ENCODE measurements at regions of chr16 and their contacts with region 1.

Region 1: DNA sequence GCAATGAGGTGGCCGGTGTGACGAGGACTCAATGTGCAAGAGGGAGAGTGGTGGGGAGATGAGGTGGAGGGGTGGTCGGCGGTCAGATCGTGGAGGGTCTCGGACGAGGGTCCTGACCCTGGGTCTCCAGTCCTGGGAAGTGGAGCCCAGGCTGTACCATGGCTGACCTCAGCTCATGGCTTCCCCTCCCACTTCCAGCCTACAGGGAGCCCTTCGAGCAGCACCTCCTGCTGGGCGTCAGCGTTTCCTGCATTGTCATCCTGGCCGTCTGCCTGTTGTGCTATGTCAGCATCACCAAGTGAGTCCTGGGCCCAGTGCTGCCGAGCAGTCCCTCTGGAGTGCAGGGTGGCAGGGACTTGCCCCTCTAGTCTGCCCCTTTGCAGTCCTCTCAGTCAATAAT is 41.8 kb downstream of the IL4R start:
- DNase-seq: peak; percentile 80
- ATAC-seq: peak; percentile 96
- H3K4me3 Mint-ChIP-seq: no peak overlapping the region
- H3K27ac Mint-ChIP-seq: no peak overlapping the region; the same call in 1 of the 2 replicates
- H3K4me1 Mint-ChIP-seq: peaks cover 3% of the 10 kb centered on the region; the same call in 1 of the 2 replicates
- H3K27me3 Mint-ChIP-seq: no peaks in the 10 kb centered on the region
- CTCF ChIP-seq: no peak

Region 2: GRCh38 chr16:26951947-26952346 is 403.7 kb before region 1 on chr16:
- CTCF ChIA-PET with region 1: no interaction called
- POLR2A ChIA-PET with region 1: no interaction called
- DNase-seq: no peak
- ATAC-seq: no peak; the same call in 1 of the 2 replicates
- H3K4me3 Mint-ChIP-seq: no peak overlapping the region
- H3K27ac Mint-ChIP-seq: no peak overlapping the region
- H3K4me1 Mint-ChIP-seq: no peaks in the 10 kb centered on the region
- H3K27me3 Mint-ChIP-seq: no peaks in the 10 kb centered on the region; the same call in 1 of the 2 replicates
- CTCF ChIP-seq: no peak

Region 3: GRCh38 chr16:27344731-27345151 is 10.9 kb before region 1 on chr16:
- CTCF ChIA-PET with region 1: interaction called, 13 read pairs
- POLR2A ChIA-PET with region 1: no interaction called
- DNase-seq: no peak
- ATAC-seq: no peak
- H3K4me3 Mint-ChIP-seq: no peak overlapping the region
- H3K27ac Mint-ChIP-seq: no peak overlapping the region
- H3K4me1 Mint-ChIP-seq: no peaks in the 10 kb centered on the region
- H3K27me3 Mint-ChIP-seq: no peaks in the 10 kb centered on the region
- CTCF ChIP-seq: no peak

Region 4: GRCh38 chr16:27374804-27375425 is 19.3 kb after region 1 on chr16:
- CTCF ChIA-PET with region 1: interaction called, 10 read pairs
- POLR2A ChIA-PET with region 1: no interaction called
- DNase-seq: peak; percentile 93
- ATAC-seq: peak; percentile 100
- H3K4me3 Mint-ChIP-seq: no peak overlapping the region
- H3K27ac Mint-ChIP-seq: no peak overlapping the region
- H3K4me1 Mint-ChIP-seq: no peaks in the 10 kb centered on the region
- H3K27me3 Mint-ChIP-seq: no peaks in the 10 kb centered on the region; the same call in 1 of the 2 replicates
- CTCF ChIP-seq: peak; percentile 32; the same call in 1 of the 2 replicates

Region 5: DNA sequence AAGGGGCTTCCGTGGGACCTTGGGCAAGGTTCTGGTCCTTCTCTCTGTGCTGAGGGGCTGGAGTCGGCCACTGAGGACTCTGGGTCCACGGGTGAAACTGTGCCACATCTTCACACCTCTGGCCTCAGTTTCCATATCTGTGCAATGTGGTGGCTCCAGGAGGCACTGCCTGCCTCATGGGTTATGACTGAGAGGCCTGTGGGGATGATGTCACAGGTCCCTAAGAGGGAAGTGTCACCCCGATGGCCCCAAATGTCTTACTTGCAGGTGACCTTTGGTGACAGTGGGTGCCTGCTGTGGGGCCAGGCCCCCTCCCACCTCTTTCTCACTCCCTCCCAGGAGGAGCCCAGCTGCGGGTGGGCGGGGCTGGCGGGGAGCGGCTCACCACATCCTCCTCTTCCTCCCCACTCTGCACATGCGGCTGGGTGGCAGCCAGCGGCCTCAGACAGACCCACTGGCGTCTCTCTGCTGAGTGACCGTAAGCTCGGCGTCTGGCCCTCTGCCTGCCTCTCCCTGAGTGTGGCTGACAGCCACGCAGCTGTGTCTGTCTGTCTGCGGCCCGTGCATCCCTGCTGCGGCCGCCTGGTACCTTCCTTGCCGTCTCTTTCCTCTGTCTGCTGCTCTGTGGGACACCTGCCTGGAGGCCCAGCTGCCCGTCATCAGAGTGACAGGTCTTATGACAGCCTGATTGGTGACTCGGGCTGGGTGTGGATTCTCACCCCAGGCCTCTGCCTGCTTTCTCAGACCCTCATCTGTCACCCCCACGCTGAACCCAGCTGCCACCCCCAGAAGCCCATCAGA is 46.4 kb after region 1 on chr16 and contains the start of gene IL21R:
- CTCF ChIA-PET with region 1: no interaction called
- POLR2A ChIA-PET with region 1: no interaction called
- DNase-seq: no peak
- ATAC-seq: no peak; the same call in 1 of the 2 replicates
- H3K4me3 Mint-ChIP-seq: no peak within 1 kb of the TSS
- H3K27ac Mint-ChIP-seq: no peak within 1 kb of the TSS
- H3K4me1 Mint-ChIP-seq: peaks cover 22% of the 10 kb centered on the region
- H3K27me3 Mint-ChIP-seq: no peaks in the 10 kb centered on the region
- CTCF ChIP-seq: no peak
- total RNA-seq, gene IL21R: 0.27 to 0.70 TPM (median 0.32 TPM) in 3 replicates

Measured in WTC11 (cell line).